ENCODE measurements at regions of chr3 and their contacts with region 1.

Region 1: GRCh38 chr3:183591881-183592521 is 36.5 kb upstream of the KLHL6 start:
- DNase-seq: peak; percentile 69
- CTCF ChIP-seq: peak; percentile 24

Region 2: GRCh38 chr3:183576487-183577107 is 15.4 kb before region 1 on chr3:
- CTCF ChIA-PET with region 1: interaction called, 26 read pairs
- POLR2A ChIA-PET with region 1: no interaction called
- DNase-seq: no peak
- CTCF ChIP-seq: no peak

Measured in GM10248 (cell line).